Activated naive CD4-positive, alpha-beta T cell treated with anti-CD3 and anti-CD28 coated beads for 36 hours (primary cell): ENCODE measurements at regions of chr5 and their contacts with region 1.

Region 1: DNA sequence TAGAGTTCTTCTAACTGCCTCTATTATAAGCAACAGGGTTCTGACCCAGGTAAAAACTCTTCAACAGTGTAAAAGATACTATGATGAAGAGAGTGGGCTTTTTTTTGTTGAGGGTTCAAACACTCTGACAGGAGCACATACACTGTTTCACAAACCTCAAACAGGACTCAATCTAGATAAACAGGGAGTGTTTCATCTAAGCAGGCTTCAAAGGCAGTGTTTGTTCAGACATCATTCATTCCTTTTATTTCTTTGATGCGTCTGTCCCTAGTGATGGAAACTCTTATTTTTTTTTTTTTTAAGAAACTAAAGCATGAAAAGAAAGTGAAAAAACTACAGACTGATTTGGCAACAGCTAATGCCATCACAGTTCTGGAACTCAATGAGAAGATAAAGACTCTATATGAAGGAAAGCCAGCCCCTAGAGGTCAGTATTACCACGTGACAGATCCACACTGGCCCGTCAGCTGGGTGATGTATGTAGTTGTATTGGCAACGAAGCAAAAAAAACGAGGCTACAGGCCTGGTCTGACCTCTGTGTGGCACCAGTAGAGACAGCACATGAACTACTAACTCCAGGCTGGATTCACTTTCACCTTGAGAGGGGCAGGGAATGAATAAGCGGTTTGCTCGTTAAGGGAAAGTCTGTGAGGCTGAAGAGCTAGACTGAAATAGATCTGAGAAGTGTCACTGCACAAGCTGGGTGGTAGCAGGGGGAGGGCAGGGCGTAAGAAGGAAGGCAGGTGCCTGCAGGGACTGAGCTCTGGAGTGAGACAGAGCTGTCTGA is 172.2 kb downstream of the CCDC192 start:
- DNase-seq: peak; percentile 59
- H3K4me3 Mint-ChIP-seq: no peak overlapping the region
- H3K27ac Mint-ChIP-seq: no peak overlapping the region
- H3K4me1 Mint-ChIP-seq: no peaks in the 10 kb centered on the region
- H3K27me3 Mint-ChIP-seq: peaks cover 3% of the 10 kb centered on the region

Region 2: DNA sequence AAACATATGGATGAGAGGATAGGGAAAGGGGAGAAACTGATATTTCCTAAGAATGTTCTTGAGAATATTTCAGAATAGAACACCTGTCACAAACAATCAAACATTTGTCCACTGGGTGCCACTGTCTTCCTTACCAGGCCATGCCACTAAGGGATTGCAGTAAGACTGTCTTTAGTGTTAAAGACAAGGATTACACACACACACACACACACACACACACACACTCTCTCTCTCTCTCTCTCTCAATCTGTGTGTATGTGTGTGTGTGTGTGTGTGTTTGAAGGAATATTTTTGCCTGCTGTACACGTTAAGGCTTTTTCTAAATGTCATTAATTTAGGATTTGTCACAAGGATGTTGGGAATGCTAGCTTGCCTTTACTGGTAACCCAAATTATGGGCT is 117.9 kb before region 1 on chr5:
- CTCF ChIA-PET with region 1: no interaction called
- intact Hi-C with region 1: loop called (anchors 5 kb)
- DNase-seq: peak; percentile 42
- H3K4me3 Mint-ChIP-seq: no peak overlapping the region
- H3K27ac Mint-ChIP-seq: no peak overlapping the region
- H3K4me1 Mint-ChIP-seq: no peaks in the 10 kb centered on the region
- H3K27me3 Mint-ChIP-seq: peaks cover 2% of the 10 kb centered on the region

Region 3: GRCh38 chr5:128403333-128403732 is 527.9 kb after region 1 on chr5:
- CTCF ChIA-PET with region 1: no interaction called
- intact Hi-C with region 1: no loop called
- DNase-seq: no peak
- H3K4me3 Mint-ChIP-seq: no peak overlapping the region
- H3K27ac Mint-ChIP-seq: no peak overlapping the region
- H3K4me1 Mint-ChIP-seq: no peaks in the 10 kb centered on the region
- H3K27me3 Mint-ChIP-seq: no peaks in the 10 kb centered on the region